GM12878 (cell line): ENCODE measurements at regions of chr20 and their contacts with region 1.

Region 1: DNA sequence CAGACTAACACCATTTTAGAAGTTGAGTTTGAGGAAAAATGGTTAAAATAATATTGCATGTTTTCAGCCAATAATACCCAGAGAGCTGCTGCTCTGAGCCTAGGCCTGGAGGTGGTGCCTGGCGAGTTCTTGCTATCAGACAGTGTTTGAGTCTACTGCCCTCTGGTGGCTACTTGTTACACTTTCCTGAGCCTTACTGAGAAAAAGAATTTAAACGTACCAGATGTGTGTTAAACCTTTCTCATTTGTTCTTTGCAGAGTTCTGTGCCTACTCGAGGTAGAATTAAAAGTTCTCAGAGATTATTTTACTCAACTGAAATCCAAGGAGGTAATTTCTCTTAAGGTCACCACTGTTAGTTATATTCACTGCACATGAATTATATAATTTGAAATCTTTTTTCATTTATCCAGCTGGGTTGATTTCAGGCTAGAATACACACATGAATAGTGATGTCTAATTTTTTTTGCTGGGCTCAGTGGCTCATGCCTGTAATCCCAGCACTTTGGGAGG is 38.2 kb downstream of the SHLD1 start:
- DNase-seq: peak; percentile 66
- ATAC-seq: peak; percentile 100
- H3K4me3 ChIP-seq: no peak overlapping the region
- H3K27ac ChIP-seq: no peak overlapping the region
- H3K4me1 ChIP-seq: no peaks in the 10 kb centered on the region
- H3K27me3 ChIP-seq: no peaks in the 10 kb centered on the region
- CTCF ChIP-seq: peak; percentile 76 to 93 (median 87); a peak in 5 of 6 replicates
- EP300 ChIP-seq: no peak
- POLR2A ChIP-seq: no peak
- RAD21 ChIP-seq: peak; percentile 98

Region 2: DNA sequence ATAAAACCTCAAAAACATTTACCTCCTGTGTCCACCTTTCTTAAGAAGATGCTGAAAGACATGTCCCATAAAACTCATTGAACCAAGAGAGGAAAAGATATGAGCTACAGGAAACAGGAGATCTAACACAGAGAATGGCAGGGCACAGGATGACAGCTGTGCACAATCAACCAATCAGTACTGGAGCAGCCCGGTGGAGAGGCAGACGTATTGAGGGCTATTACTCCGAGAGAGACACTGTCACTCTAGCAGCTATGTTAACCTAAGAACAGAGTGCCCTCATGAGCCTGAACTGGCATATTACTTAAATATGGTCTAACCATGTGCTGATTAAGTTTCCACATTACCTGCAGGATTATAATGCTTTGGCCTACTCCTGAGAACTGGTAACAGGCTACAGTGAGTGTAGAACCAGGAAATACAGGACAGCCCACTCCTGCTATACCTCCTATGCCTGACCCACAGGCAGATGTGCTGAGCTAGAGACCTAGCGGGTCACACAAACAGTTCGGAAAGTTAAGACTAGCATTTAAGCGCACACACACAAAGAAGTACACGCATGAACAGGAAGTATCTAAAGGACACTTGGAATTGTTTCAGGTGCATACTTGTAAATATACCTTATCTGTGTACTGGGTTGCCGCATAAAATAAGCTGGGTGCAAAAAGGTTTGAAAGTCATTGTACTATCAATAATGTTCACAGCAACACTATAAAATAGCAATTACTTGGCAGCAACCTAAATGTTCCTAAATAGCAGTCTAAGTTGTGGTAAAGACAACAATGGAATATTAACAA is 237.5 kb before region 1 on chr20:
- CTCF ChIA-PET with region 1: interaction called, 36 read pairs
- POLR2A ChIA-PET with region 1: interaction called, 7 read pairs
- RAD21 ChIA-PET with region 1: interaction called, 22 read pairs
- SMC1A ChIA-PET with region 1: interaction called, 10 read pairs
- in situ Hi-C with region 1: no loop called
- intact Hi-C with region 1: no loop called
- DNase-seq: no peak
- ATAC-seq: peak; percentile 33
- H3K4me3 ChIP-seq: no peak overlapping the region
- H3K27ac ChIP-seq: no peak overlapping the region
- H3K4me1 ChIP-seq: no peaks in the 10 kb centered on the region
- H3K27me3 ChIP-seq: no peaks in the 10 kb centered on the region
- CTCF ChIP-seq: no peak
- EP300 ChIP-seq: no peak
- POLR2A ChIP-seq: peak; percentile 49; the same call in 1 of the 2 replicates
- RAD21 ChIP-seq: no peak

Region 3: GRCh38 chr20:5596401-5597193 is 191.8 kb before region 1 on chr20:
- CTCF ChIA-PET with region 1: interaction called, 9 read pairs
- POLR2A ChIA-PET with region 1: interaction called, 4 read pairs
- RAD21 ChIA-PET with region 1: interaction called, 10 read pairs
- SMC1A ChIA-PET with region 1: interaction called, 21 read pairs
- in situ Hi-C with region 1: no loop called
- intact Hi-C with region 1: no loop called
- DNase-seq: no peak
- ATAC-seq: peak; percentile 45
- H3K4me3 ChIP-seq: peak overlapping the region; percentile 48; the same call in 1 of the 2 replicates
- H3K27ac ChIP-seq: peak overlapping the region; percentile 96
- H3K4me1 ChIP-seq: peaks cover 72% of the 10 kb centered on the region
- H3K27me3 ChIP-seq: no peaks in the 10 kb centered on the region
- CTCF ChIP-seq: no peak
- EP300 ChIP-seq: no peak
- POLR2A ChIP-seq: no peak
- RAD21 ChIP-seq: 0 out of 2 replicates have a peak, but pooled peaks have one; percentile 3

Region 4: DNA sequence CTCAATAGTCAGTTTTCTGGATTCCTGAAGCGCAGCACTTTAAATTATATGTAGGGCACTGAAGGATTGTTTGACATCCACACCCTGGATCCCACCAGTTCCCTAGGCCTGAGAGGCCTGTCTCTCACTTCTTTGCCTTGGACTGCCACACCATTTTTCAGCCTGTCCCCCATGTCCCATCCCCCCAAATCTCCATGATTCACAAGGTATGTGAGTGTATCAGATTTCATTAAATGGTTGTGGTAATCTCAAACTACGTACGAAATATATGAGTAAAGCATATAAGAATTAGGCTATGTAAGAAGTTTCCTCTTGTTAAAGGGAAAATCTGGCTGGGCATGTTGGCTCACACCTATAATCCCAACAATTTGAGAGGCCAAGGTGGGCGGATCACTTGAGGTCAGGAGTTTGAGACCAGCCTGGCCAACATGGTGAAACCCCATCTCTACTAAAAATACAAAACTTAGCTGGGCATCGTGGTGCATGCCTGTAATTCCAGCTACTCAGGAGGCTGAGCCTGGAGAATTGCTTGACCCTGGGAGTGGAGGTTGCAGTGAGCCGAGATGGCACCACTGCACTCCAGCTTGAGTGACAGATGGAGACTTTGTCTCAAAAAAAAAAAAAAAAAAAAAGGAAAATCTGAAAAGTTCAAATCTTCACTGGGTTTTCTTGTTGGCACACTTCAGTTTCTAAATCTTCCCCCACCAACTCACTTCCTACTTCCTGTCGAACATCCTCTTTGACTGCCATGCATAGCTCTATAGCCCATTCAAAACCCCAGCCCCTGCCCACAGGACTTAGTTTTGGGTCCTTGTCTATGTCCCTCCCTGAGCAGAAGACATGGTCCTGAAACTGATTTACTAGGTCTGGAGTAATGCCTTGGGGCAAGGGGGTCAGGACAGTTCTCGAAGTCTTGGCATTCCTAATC is 135.6 kb before region 1 on chr20:
- CTCF ChIA-PET with region 1: interaction called, 30 read pairs
- POLR2A ChIA-PET with region 1: interaction called, 6 read pairs
- RAD21 ChIA-PET with region 1: interaction called, 16 read pairs
- SMC1A ChIA-PET with region 1: interaction called, 15 read pairs
- in situ Hi-C with region 1: no loop called
- intact Hi-C with region 1: no loop called
- DNase-seq: no peak
- ATAC-seq: peak; percentile 32
- H3K4me3 ChIP-seq: no peak overlapping the region
- H3K27ac ChIP-seq: peak overlapping the region; percentile 95
- H3K4me1 ChIP-seq: peaks cover 59% of the 10 kb centered on the region
- H3K27me3 ChIP-seq: no peaks in the 10 kb centered on the region
- CTCF ChIP-seq: no peak
- EP300 ChIP-seq: no peak
- POLR2A ChIP-seq: no peak
- RAD21 ChIP-seq: no peak

Region 5: DNA sequence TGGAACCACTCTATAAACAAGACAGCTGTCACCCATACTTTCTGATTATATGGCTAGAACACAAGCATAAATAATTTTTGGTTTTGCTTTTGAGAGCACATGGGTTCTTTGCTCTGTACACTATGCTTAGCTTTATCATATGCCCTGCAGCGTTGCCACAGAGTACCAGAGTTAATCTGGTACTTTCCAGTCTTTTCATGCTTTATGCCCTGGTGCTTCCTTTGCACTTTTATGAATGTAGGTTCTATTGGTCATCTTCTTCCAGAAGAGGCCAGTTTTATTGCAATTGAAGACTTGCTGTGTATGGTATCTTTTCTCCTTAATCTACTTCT is 17.5 kb before region 1 on chr20:
- CTCF ChIA-PET with region 1: interaction called, 6 read pairs
- POLR2A ChIA-PET with region 1: interaction called, 3 read pairs
- RAD21 ChIA-PET with region 1: interaction called, 3 read pairs
- SMC1A ChIA-PET with region 1: interaction called, 11 read pairs
- in situ Hi-C with region 1: no loop called
- intact Hi-C with region 1: no loop called
- DNase-seq: peak; percentile 54
- ATAC-seq: peak; percentile 93
- H3K4me3 ChIP-seq: peak overlapping the region; percentile 40; the same call in 1 of the 2 replicates
- H3K27ac ChIP-seq: peak overlapping the region; percentile 66
- H3K4me1 ChIP-seq: peaks cover 46% of the 10 kb centered on the region
- H3K27me3 ChIP-seq: no peaks in the 10 kb centered on the region
- CTCF ChIP-seq: no peak
- EP300 ChIP-seq: no peak
- POLR2A ChIP-seq: no peak
- RAD21 ChIP-seq: no peak

Region 6: GRCh38 chr20:5908981-5909380 is 120.5 kb after region 1 on chr20:
- CTCF ChIA-PET with region 1: no interaction called
- POLR2A ChIA-PET with region 1: no interaction called
- RAD21 ChIA-PET with region 1: no interaction called
- SMC1A ChIA-PET with region 1: no interaction called
- in situ Hi-C with region 1: no loop called
- intact Hi-C with region 1: no loop called
- DNase-seq: no peak
- ATAC-seq: no peak
- H3K4me3 ChIP-seq: no peak overlapping the region
- H3K27ac ChIP-seq: no peak overlapping the region
- H3K4me1 ChIP-seq: no peaks in the 10 kb centered on the region
- H3K27me3 ChIP-seq: peaks cover 3% of the 10 kb centered on the region in 2 experiments; a peak in 2 of 4 replicates
- CTCF ChIP-seq: no peak
- EP300 ChIP-seq: no peak
- POLR2A ChIP-seq: no peak
- RAD21 ChIP-seq: no peak

Region 7: DNA sequence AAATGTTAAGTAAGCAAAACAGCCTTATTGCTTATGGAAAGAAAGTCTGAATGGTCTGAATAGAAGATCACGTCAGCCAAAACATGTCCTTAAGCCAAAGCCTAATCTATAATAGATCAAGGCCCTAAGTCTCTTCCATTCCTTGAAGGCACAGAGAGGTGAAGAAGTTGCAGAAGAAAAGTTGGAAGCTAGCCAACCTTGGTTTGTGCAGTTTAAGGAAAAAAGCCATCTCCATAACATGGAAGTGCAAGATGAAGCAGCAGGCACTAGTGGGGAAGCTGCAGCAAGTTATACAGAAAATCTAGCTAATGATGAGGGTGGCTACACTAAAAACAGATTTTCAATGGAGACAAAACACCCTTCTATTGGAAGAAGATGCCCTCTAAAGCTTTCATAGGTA is 236.3 kb after region 1 on chr20:
- CTCF ChIA-PET with region 1: no interaction called
- POLR2A ChIA-PET with region 1: no interaction called
- RAD21 ChIA-PET with region 1: no interaction called
- SMC1A ChIA-PET with region 1: no interaction called
- in situ Hi-C with region 1: no loop called
- intact Hi-C with region 1: no loop called
- DNase-seq: no peak
- ATAC-seq: no peak
- H3K4me3 ChIP-seq: no peak overlapping the region
- H3K27ac ChIP-seq: no peak overlapping the region
- H3K4me1 ChIP-seq: no peaks in the 10 kb centered on the region
- H3K27me3 ChIP-seq: no peaks in the 10 kb centered on the region
- CTCF ChIP-seq: no peak
- EP300 ChIP-seq: no peak
- POLR2A ChIP-seq: no peak
- RAD21 ChIP-seq: no peak